Naive thymus-derived CD4-positive, alpha-beta T cell (primary cell): ENCODE measurements at regions of chr2 and their contacts with region 1.

Region 1: DNA sequence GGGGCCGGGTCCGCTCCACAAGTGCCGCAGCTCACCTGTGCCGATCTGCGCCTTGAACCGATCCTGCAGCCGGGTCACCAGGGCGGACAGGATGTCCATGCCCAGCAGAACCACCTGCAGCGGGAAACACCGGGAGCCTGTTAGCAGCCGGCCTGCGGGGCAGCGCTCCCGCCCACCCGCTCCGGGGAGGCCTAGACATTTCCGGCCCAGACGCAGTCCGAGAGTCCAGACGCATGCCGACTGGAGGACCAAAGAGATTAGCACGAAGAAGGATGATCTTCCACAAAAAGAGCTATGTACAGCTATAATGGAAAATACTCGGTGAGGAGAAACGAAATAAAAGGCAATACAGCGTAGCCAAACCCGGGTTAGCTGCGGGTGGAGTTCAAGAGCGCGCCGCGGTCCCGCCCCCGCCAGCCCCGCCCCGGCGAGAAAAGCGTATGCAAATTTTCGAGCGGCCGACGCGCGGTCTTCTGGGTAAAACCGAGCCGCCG is 421 bp upstream of the RNU4ATAC start:
- DNase-seq: peak in 4 of 9 donors; percentile 74 to 91 (median 87)
- ATAC-seq: peak; percentile 83
- H3K4me3 ChIP-seq: peak overlapping the region; percentile 99
- H3K4me3 Mint-ChIP-seq: peak overlapping the region; percentile 85 to 99 (median 96)
- H3K27ac ChIP-seq: peak overlapping the region; percentile 98
- H3K27ac Mint-ChIP-seq: peak overlapping the region; percentile 95 to 100 (median 99)
- H3K4me1 ChIP-seq: peaks cover 9 to 11% of the 10 kb centered on the region in 2 donors
- H3K4me1 Mint-ChIP-seq: peaks cover 18 to 65% (median 43%) of the 10 kb centered on the region in 7 donors
- H3K27me3 ChIP-seq: no peaks in the 10 kb centered on the region
- H3K27me3 Mint-ChIP-seq: no peaks in the 10 kb centered on the region

Region 2: GRCh38 chr2:119678998-119679710 is 1851.1 kb before region 1 on chr2 and contains the start of gene TMEM177:
- CTCF ChIA-PET with region 1: no interaction called
- POLR2A ChIA-PET with region 1: no interaction called
- intact Hi-C with region 1: loop called in 1 of 2 experiments (anchors 2 kb)
- DNase-seq: peak; percentile 72 to 96 (median 87)
- ATAC-seq: peak; percentile 91
- H3K4me3 ChIP-seq: peak within 1 kb of the TSS; percentile 95
- H3K4me3 Mint-ChIP-seq: peak within 1 kb of the TSS; percentile 87 to 96 (median 90)
- H3K27ac ChIP-seq: peak within 1 kb of the TSS; percentile 88
- H3K27ac Mint-ChIP-seq: peak within 1 kb of the TSS; percentile 58 to 99 (median 97)
- H3K4me1 ChIP-seq: peaks cover 0 to 15% of the 10 kb centered on the region in 2 donors
- H3K4me1 Mint-ChIP-seq: peaks cover 25 to 48% (median 38%) of the 10 kb centered on the region in 7 donors
- H3K27me3 ChIP-seq: no peaks in the 10 kb centered on the region
- H3K27me3 Mint-ChIP-seq: peaks cover 0 to 21% (median 0%) of the 10 kb centered on the region in 5 donors
- total RNA-seq, gene TMEM177: 5.5 to 38.1 (median 11.6) TPM

Region 3: GRCh38 chr2:120647491-120647890 is 882.8 kb before region 1 on chr2:
- CTCF ChIA-PET with region 1: no interaction called
- POLR2A ChIA-PET with region 1: no interaction called
- intact Hi-C with region 1: no loop called
- DNase-seq: no peak
- ATAC-seq: no peak
- H3K4me3 ChIP-seq: no peak overlapping the region
- H3K4me3 Mint-ChIP-seq: no peak overlapping the region
- H3K27ac ChIP-seq: no peak overlapping the region
- H3K27ac Mint-ChIP-seq: no peak overlapping the region
- H3K4me1 ChIP-seq: no peaks in the 10 kb centered on the region
- H3K4me1 Mint-ChIP-seq: no peaks in the 10 kb centered on the region
- H3K27me3 ChIP-seq: no peaks in the 10 kb centered on the region
- H3K27me3 Mint-ChIP-seq: peaks cover 0 to 12% (median under 1%) of the 10 kb centered on the region in 5 donors

Region 4: GRCh38 chr2:121519732-121520640 is 10.3 kb before region 1 on chr2:
- CTCF ChIA-PET with region 1: interaction called, 3 read pairs
- POLR2A ChIA-PET with region 1: interaction called, 18 read pairs
- intact Hi-C with region 1: no loop called
- DNase-seq: no peak
- ATAC-seq: no peak
- H3K4me3 ChIP-seq: no peak overlapping the region
- H3K4me3 Mint-ChIP-seq: no peak overlapping the region
- H3K27ac ChIP-seq: no peak overlapping the region
- H3K27ac Mint-ChIP-seq: peak overlapping the region in 1 of 9 donors; percentile 21
- H3K4me1 ChIP-seq: no peaks in the 10 kb centered on the region
- H3K4me1 Mint-ChIP-seq: peaks cover 0 to 8% (median 1%) of the 10 kb centered on the region in 7 donors
- H3K27me3 ChIP-seq: no peaks in the 10 kb centered on the region
- H3K27me3 Mint-ChIP-seq: no peaks in the 10 kb centered on the region

Region 5: DNA sequence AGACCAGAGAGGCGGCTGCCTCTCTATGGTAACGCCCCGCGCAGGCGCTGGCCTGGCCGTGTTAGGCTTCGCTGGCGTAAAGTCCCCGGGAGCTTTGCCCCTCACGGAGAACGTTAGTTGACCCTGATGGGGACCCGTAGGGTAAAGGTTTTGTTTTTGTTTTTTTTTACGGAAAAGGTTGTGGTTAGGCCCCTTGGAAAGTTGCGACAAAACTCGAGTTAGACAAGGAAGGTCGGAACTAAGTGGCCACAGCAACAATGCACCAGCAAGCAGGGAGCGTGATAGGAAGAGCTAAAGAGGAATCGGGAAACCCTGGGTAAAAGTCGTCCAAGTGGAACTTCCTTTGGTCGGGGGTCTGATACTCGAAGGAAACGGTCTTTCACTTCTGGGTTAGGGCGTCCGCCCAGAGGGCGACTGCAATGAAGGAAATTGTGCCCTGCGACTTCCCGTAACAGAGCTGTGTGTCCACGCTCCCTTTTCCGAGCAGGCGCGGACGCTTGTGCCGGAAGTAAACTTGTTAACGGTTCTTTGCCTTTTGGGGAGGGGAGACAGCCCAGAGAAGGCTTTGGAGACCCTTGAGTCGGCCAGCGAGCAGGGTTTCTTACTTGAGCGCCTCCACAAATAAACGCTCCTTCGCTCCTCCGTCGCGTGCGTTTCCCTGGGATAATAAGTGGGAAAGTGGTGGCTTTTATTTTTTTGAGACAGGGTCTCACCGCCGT is 119.5 kb after region 1 on chr2:
- CTCF ChIA-PET with region 1: interaction called, 6 read pairs
- POLR2A ChIA-PET with region 1: interaction called, 64 read pairs
- intact Hi-C with region 1: loop called (anchors 1 kb)
- DNase-seq: peak; percentile 89 to 99 (median 97)
- ATAC-seq: peak; percentile 97
- H3K4me3 ChIP-seq: peak overlapping the region; percentile 88
- H3K4me3 Mint-ChIP-seq: peak overlapping the region; percentile 92 to 100 (median 98)
- H3K27ac ChIP-seq: peak overlapping the region; percentile 90
- H3K27ac Mint-ChIP-seq: peak overlapping the region; percentile 98 to 100 (median 99)
- H3K4me1 ChIP-seq: peaks cover 10 to 11% of the 10 kb centered on the region in 2 donors
- H3K4me1 Mint-ChIP-seq: peaks cover 54 to 88% (median 76%) of the 10 kb centered on the region in 7 donors
- H3K27me3 ChIP-seq: no peaks in the 10 kb centered on the region
- H3K27me3 Mint-ChIP-seq: peaks cover 0 to 2% (median 0%) of the 10 kb centered on the region in 5 donors

Region 6: DNA sequence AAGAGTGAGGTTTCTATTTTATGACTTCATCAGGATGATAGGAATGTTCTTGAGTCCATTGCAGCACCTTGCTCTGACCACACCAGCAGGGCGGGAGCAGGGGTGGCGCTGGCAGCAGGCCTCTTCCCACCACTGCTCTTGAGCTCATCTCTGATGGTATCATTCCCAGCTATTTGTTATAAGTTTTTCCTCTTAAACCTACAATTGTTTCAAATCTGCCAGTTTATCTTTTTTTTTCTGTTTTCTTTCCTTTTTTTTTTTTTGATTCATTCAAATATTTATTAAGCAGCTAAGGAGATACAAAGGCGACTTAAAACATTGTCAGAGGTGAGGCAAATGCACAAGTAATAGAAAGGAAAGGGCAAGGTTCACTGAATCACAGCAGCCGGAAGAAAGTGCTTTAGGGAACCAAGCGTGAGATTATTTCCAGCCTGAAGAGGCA is 177.7 kb after region 1 on chr2:
- CTCF ChIA-PET with region 1: no interaction called
- POLR2A ChIA-PET with region 1: no interaction called
- intact Hi-C with region 1: no loop called
- DNase-seq: no peak
- ATAC-seq: no peak
- H3K4me3 ChIP-seq: no peak overlapping the region
- H3K4me3 Mint-ChIP-seq: no peak overlapping the region
- H3K27ac ChIP-seq: no peak overlapping the region
- H3K27ac Mint-ChIP-seq: no peak overlapping the region
- H3K4me1 ChIP-seq: no peaks in the 10 kb centered on the region
- H3K4me1 Mint-ChIP-seq: peaks cover 0 to 3% (median 0%) of the 10 kb centered on the region in 7 donors
- H3K27me3 ChIP-seq: no peaks in the 10 kb centered on the region
- H3K27me3 Mint-ChIP-seq: peaks cover 0 to 3% (median 0%) of the 10 kb centered on the region in 5 donors

Region 7: GRCh38 chr2:121722479-121722878 is 192.2 kb after region 1 on chr2:
- CTCF ChIA-PET with region 1: interaction called, 9 read pairs
- POLR2A ChIA-PET with region 1: interaction called, 10 read pairs
- intact Hi-C with region 1: loop called (anchors 1 kb)
- DNase-seq: no peak
- ATAC-seq: no peak
- H3K4me3 ChIP-seq: no peak overlapping the region
- H3K4me3 Mint-ChIP-seq: no peak overlapping the region
- H3K27ac ChIP-seq: no peak overlapping the region
- H3K27ac Mint-ChIP-seq: no peak overlapping the region
- H3K4me1 ChIP-seq: peaks cover 0 to 6% of the 10 kb centered on the region in 2 donors
- H3K4me1 Mint-ChIP-seq: peaks cover 2 to 22% (median 6%) of the 10 kb centered on the region in 7 donors
- H3K27me3 ChIP-seq: no peaks in the 10 kb centered on the region
- H3K27me3 Mint-ChIP-seq: no peaks in the 10 kb centered on the region

Region 8: DNA sequence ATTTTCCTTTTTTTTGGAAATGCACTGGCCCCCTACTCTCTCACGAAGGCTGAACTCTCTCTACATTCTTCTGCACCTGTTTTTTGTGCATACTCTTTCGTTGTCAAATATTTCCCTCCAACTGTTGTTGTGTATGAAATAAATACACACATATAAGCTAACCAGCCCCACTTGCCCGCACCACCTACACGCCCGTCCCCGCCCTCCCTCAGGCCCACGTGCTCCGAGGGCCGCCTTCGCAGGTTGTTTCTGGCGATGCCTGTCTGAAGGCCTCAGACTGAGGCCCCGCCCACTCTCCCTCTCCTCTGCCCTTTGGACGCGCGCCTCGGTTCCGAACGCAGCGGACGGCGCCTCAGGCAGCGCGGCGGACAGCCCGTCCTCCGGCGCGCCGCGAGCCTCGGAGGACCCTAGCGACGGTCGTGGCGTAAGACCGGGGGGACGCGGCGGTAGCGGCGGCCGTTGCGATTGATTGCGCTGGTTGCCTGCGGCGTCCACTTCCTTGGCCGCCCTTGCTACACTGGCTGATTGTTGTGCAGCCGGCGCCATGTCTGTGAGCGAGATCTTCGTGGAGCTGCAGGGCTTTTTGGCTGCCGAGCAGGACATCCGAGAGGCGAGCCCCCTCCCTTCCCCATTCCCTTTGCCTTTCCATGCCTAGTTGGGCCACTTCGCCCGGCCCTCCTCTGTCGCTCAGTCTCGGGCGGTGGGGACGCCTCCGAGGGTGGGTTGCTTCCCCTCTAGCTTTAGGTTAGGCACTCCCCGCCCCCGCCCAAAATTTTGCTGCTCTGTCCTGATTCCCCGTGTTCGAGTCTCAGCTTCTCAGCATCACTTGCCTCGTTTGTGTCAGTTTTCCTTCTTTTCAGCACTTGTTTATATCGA is 225.2 kb after region 1 on chr2 and contains the start of gene TSN:
- CTCF ChIA-PET with region 1: interaction called, 3 read pairs
- POLR2A ChIA-PET with region 1: interaction called, 16 read pairs
- intact Hi-C with region 1: loop called (anchors 1 kb)
- DNase-seq: peak; percentile 94 to 97 (median 96)
- ATAC-seq: peak; percentile 99
- H3K4me3 ChIP-seq: peak within 1 kb of the TSS; percentile 91
- H3K4me3 Mint-ChIP-seq: peak within 1 kb of the TSS; percentile 90 to 100 (median 96)
- H3K27ac ChIP-seq: peak within 1 kb of the TSS; percentile 82
- H3K27ac Mint-ChIP-seq: peak within 1 kb of the TSS; percentile 69 to 98 (median 94)
- H3K4me1 ChIP-seq: peaks cover 4 to 10% of the 10 kb centered on the region in 2 donors
- H3K4me1 Mint-ChIP-seq: peaks cover 20 to 43% (median 32%) of the 10 kb centered on the region in 7 donors
- H3K27me3 ChIP-seq: no peaks in the 10 kb centered on the region
- H3K27me3 Mint-ChIP-seq: no peaks in the 10 kb centered on the region
- total RNA-seq, gene TSN: 35.8 to 65.8 (median 58.3) TPM

Region 9: DNA sequence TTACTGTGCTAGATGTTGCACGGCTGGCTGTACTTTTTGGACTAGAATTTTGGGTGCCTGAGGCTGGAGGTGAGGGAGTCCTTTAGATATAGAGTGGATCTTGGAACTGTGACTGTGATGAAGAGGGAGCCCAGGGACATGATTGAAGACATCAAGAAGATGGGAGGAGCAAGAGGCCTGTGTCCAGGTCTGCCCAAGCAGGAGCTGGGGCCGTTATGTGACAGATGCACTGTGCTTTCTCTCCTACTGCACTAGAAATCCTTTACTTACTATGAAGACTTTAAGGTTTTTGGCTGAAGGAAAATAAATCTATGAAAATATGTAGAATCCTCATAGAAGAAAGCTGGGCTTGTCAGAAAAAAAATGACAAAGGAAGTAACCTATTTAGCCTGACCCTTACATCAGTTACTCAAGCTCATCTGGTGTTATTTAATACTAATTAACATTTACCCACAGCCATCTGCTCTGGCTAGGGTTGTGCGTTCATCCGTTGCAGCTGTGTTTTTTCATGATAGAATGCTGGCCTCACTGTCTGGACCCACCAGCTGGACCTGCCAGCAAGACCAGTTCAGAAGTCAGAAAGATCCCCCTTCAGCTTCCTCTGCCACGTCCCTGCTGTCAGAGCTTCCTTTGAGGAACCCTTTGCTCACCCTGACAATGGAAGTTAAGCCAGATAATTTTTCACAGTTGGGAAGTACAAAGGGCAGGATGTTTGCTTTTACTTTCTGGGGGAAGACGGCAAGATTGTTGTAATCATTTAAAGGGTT is 241.9 kb after region 1 on chr2:
- CTCF ChIA-PET with region 1: no interaction called
- POLR2A ChIA-PET with region 1: no interaction called
- intact Hi-C with region 1: no loop called
- DNase-seq: no peak
- ATAC-seq: no peak
- H3K4me3 ChIP-seq: no peak overlapping the region
- H3K4me3 Mint-ChIP-seq: no peak overlapping the region
- H3K27ac ChIP-seq: no peak overlapping the region
- H3K27ac Mint-ChIP-seq: peak overlapping the region in 2 of 9 donors; percentile 5 to 72
- H3K4me1 ChIP-seq: no peaks in the 10 kb centered on the region
- H3K4me1 Mint-ChIP-seq: peaks cover 0 to 5% (median 0%) of the 10 kb centered on the region in 7 donors
- H3K27me3 ChIP-seq: no peaks in the 10 kb centered on the region
- H3K27me3 Mint-ChIP-seq: no peaks in the 10 kb centered on the region

Region 10: DNA sequence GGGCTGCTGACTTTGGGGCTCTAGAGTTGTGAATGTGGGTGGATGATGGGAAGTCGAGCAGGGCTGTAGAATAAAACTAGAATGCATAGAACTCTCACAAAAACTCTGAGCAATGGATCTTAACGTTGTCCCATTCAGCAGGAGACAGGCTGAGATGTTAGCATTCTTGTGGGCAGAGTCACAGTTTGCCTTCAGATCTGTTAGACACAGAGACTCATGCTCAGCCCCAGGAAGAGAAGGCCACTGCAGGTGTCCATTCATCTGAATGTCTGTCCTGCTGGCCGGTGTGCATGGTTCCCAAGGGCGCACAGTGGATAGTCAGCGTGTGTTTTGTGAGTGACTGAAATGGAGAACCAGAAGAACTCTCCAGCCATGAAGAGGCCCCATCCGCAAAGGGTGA is 336.5 kb after region 1 on chr2:
- CTCF ChIA-PET with region 1: no interaction called
- POLR2A ChIA-PET with region 1: no interaction called
- intact Hi-C with region 1: no loop called
- DNase-seq: no peak
- ATAC-seq: no peak
- H3K4me3 ChIP-seq: no peak overlapping the region
- H3K4me3 Mint-ChIP-seq: no peak overlapping the region
- H3K27ac ChIP-seq: no peak overlapping the region
- H3K27ac Mint-ChIP-seq: no peak overlapping the region
- H3K4me1 ChIP-seq: no peaks in the 10 kb centered on the region
- H3K4me1 Mint-ChIP-seq: peaks cover 0 to 1% (median 0%) of the 10 kb centered on the region in 7 donors
- H3K27me3 ChIP-seq: no peaks in the 10 kb centered on the region
- H3K27me3 Mint-ChIP-seq: peaks cover 0 to 30% (median 16%) of the 10 kb centered on the region in 5 donors

Region 11: DNA sequence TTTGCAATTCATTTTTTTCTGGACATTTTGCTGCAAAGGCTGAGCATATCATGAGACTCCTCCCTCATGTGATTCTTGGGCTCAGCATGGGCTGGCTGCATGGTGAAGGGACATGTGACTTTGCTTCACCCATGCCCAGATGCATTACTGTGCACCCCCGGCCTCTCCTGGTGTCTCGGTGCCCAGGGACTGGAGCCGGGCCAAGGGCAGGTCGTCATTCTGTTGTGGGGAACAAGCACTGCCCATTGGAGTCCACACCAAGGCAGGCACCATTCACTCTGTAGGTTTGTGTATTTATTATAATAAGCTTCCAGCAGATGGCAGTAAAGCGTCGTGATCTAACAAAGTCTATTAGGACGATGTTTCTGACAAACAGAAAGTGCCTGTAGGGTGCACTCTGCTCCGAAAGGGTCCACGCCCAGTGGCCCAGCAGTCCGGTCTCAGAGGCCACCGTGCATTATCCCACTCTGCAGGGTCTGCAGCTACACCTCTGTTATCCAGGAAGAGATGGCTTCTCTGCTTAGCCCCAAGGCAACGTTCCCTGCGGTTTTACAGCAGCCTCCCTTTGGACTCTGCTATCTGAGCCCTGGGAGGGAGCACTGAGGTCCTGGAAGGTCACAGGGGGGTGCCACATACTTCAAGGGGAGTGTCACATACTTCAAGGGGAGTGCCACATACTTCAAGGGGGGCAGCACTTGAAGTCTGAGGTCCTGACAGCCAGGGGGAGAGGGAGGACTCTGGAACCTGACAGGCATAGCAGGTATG is 444.8 kb after region 1 on chr2:
- CTCF ChIA-PET with region 1: no interaction called
- POLR2A ChIA-PET with region 1: no interaction called
- intact Hi-C with region 1: loop called in 1 of 2 experiments (anchors 2 kb)
- DNase-seq: peak; percentile 12 to 70 (median 59)
- ATAC-seq: peak; percentile 90
- H3K4me3 ChIP-seq: peak overlapping the region; percentile 68
- H3K4me3 Mint-ChIP-seq: peak overlapping the region; percentile 71 to 87 (median 82)
- H3K27ac ChIP-seq: no peak overlapping the region
- H3K27ac Mint-ChIP-seq: peak overlapping the region in 3 of 9 donors; percentile 21 to 66 (median 25)
- H3K4me1 ChIP-seq: peaks cover 0 to 4% of the 10 kb centered on the region in 2 donors
- H3K4me1 Mint-ChIP-seq: peaks cover 6 to 11% (median 8%) of the 10 kb centered on the region in 7 donors
- H3K27me3 ChIP-seq: no peaks in the 10 kb centered on the region
- H3K27me3 Mint-ChIP-seq: peaks cover 0 to 20% (median 8%) of the 10 kb centered on the region in 5 donors